ENCODE measurements at regions of chr11 and their contacts with region 1.

Region 1: GRCh38 chr11:11044137-11044855 is 186.4 kb upstream of the ZBED5 start:
- DNase-seq: no peak
- ATAC-seq: no peak
- H3K4me3 ChIP-seq: no peak overlapping the region
- H3K27ac ChIP-seq: no peak overlapping the region
- H3K4me1 ChIP-seq: no peaks in the 10 kb centered on the region
- H3K27me3 ChIP-seq: no peaks in the 10 kb centered on the region
- CTCF ChIP-seq: no peak
- POLR2A ChIP-seq: no peak

Region 2: GRCh38 chr11:10943968-10944367 is 100.3 kb before region 1 on chr11:
- intact Hi-C with region 1: no loop called
- DNase-seq: no peak
- ATAC-seq: no peak
- H3K4me3 ChIP-seq: no peak overlapping the region
- H3K27ac ChIP-seq: no peak overlapping the region
- H3K4me1 ChIP-seq: no peaks in the 10 kb centered on the region
- H3K27me3 ChIP-seq: no peaks in the 10 kb centered on the region
- CTCF ChIP-seq: no peak
- POLR2A ChIP-seq: no peak

Region 3: GRCh38 chr11:11171854-11172253 is 127.6 kb after region 1 on chr11:
- intact Hi-C with region 1: no loop called
- DNase-seq: no peak
- ATAC-seq: peak in 1 of 4 donors; percentile 12
- H3K4me3 ChIP-seq: no peak overlapping the region
- H3K27ac ChIP-seq: no peak overlapping the region
- H3K4me1 ChIP-seq: no peaks in the 10 kb centered on the region
- H3K27me3 ChIP-seq: no peaks in the 10 kb centered on the region
- CTCF ChIP-seq: no peak
- POLR2A ChIP-seq: no peak

Region 4: DNA sequence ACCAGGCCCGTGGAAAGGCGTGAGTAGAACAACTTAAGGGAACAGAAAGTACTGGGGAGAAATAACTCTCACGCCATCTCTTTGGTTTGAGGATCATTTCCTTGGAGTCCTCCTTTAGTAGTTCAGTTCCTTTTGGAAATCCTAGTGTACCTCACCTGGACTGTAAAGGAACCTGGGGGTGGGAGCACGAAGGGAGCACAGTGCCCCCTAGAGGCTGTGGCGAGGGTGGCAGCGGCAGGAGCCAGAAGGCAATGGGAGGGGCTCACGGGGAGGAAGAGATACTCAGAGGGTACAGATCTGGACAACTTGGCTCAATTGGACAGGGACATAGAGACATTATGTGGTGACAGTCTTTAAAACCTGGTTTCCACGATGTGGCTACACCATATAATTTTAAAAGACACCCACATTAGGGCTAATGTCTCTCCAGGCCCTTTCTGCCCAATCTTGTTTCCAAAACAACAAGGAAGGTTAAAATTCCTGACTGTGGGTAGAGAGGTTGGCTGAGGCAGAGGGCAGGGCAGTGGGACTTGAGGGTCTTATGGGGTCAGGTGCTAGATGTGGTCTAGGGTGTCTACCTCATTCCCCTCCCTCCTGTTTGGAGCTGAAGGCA is 221.8 kb after region 1 on chr11:
- intact Hi-C with region 1: loop called in 1 of 2 experiments (anchors 10 kb)
- DNase-seq: peak in 1 of 3 donors; percentile 58
- ATAC-seq: peak; percentile 70 to 89 (median 78)
- H3K4me3 ChIP-seq: no peak overlapping the region
- H3K27ac ChIP-seq: no peak overlapping the region
- H3K4me1 ChIP-seq: no peaks in the 10 kb centered on the region
- H3K27me3 ChIP-seq: no peaks in the 10 kb centered on the region
- CTCF ChIP-seq: peak; percentile 55 to 88 (median 75)
- POLR2A ChIP-seq: no peak

Measured in right lobe of liver (tissue), 6 donors.